A549 (cell line): ENCODE measurements at regions of chr11 and their contacts with region 1.

Region 1: DNA sequence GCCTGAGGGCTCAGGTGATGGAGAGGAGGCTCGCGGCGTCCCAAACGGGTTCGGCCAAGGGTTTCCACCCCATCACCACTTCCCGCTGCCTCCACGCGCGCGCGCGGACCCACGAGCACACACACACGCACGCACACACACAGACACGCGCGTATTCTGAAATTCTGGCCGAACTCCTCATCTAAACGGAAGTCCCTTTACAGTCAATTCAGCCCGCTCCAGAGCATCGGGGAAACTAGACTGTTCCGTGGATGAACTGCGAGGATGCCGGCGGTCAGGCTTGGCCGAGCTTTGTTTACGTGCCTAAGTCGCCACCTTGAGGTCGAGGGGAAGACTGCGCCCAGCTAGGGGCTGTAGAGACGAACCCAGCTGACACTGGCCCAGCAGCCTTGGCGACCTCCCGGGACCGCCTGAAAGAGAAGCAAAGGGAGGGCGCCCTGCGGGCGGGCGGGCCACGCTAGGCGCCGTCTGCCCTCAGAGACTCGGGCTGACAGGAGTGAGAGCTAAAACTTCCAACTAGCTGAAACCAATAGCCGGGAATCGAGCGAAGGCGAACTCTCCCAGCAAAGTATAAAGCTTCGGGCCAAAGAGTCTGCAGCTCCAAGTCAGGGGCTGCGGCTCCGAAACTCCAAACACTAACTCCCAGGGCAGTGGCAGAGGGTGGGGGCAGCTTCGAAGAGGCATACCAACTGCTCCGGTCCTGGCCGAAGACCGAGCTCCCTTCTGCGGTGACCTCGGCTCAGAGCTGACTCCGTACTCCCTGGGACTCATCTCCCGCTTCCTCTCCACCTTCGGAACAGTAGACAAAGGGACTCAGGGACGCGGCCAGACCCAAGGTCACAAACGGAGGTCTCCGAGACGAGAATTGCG is 124.7 kb upstream of the C11orf58 start:
- DNase-seq: peak; percentile 79 to 83
- ATAC-seq: peak; percentile 95 to 99
- H3K4me3 ChIP-seq: peak overlapping the region; percentile 49
- H3K27ac ChIP-seq: peak overlapping the region in 1 of 2 experiments; percentile 40; a peak in 1 of 6 replicates
- H3K4me1 ChIP-seq: peaks cover 10% of the 10 kb centered on the region; the same call in 2 of the 3 replicates
- CTCF ChIP-seq: peak; percentile 81
- EP300 ChIP-seq: no peak
- POLR2A ChIP-seq: no peak
- RAD21 ChIP-seq: peak; percentile 91 to 93

Region 2: DNA sequence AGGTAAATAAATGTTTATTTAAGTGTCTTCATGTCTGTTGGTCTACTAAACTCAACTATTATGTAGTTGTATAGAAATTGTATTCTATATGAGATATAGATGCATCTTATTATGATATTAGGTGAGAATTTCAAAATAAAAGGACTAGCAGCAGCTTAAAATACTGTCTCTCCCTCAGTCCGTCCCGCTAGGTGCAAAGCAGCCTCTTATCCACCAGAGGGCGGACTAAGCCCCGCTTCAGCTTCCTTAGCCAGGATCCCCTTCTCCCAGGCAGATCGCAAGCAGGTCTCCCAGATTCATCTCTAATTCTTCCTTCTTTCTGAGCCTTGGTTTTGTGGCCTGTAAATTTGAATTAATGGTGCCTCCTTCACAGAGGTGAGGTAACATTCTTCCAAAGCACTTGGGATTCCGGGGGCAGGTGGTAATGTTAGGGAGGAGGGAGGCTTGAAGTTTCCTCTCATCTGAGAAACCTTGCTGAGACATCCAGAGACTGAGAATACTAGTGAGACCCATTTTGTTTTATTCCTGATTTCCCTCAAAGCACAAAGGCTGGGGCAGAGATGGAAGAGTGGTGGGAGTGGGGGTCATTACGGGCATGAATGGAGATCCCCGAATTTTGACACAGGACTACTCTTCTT is 1512.6 kb before region 1 on chr11:
- CTCF ChIA-PET with region 1: interaction called, 13 read pairs
- POLR2A ChIA-PET with region 1: no interaction called
- DNase-seq: peak; percentile 57 to 65
- ATAC-seq: peak; percentile 93 to 98
- H3K4me3 ChIP-seq: no peak overlapping the region
- H3K27ac ChIP-seq: no peak overlapping the region
- H3K4me1 ChIP-seq: no peaks in the 10 kb centered on the region
- CTCF ChIP-seq: peak; percentile 88
- EP300 ChIP-seq: no peak
- POLR2A ChIP-seq: no peak
- RAD21 ChIP-seq: peak; percentile 80 to 81

Region 3: DNA sequence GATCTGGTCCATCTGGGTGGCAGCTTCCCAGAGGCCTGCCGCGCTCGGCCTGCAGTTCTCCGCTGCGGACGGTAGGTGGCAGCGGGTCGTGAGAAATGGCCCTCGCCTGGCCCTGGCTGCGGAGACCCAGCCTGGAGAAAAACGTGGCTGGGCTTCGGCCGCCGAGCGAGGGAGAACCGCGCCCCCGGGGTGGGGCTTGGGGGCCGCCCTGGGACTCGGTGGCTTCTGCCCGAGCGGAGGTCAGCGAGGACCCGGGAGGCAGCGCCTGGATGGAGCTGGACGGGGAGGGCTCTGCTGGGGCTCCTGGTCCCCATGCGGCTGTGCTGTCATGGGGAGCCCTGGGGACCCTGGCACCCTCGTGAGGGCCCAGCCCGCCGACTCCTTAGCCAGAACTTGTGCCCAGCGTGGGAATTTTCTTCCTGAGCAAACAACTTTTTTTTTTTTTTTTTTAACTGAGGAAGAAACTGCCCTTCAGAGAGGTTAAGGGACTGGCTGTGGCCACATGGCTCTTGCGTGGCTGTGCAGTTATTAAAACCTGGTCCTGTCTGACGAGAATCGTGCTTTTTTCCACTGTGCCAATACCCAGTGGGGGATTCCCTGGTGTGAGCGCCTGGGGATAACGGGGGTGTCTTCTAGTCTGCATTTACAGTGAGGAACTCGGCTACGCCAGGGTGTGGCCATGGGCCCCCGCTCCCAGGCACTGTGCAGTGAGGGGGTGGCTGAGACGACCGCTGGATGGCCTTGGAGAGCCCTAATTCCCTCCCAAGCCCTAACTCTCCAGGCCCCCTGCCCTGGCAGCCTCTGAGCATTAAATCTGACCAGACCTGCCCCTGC is 963.4 kb before region 1 on chr11:
- CTCF ChIA-PET with region 1: interaction called, 21 read pairs
- POLR2A ChIA-PET with region 1: interaction called, 3 read pairs
- DNase-seq: peak; percentile 79 to 90
- ATAC-seq: peak; percentile 97 to 98
- H3K4me3 ChIP-seq: peak overlapping the region; percentile 43
- H3K27ac ChIP-seq: peak overlapping the region; percentile 84
- H3K4me1 ChIP-seq: peaks cover 6% of the 10 kb centered on the region
- CTCF ChIP-seq: peak; percentile 82
- EP300 ChIP-seq: no peak
- POLR2A ChIP-seq: peak; percentile 59
- RAD21 ChIP-seq: peak; percentile 83 to 95

Region 4: GRCh38 chr11:15770798-15771414 is 842.8 kb before region 1 on chr11:
- CTCF ChIA-PET with region 1: interaction called, 20 read pairs
- POLR2A ChIA-PET with region 1: no interaction called
- DNase-seq: peak; percentile 29 to 36
- ATAC-seq: peak; percentile 59 to 83; a peak in 4 of 6 replicates
- H3K4me3 ChIP-seq: no peak overlapping the region
- H3K27ac ChIP-seq: no peak overlapping the region
- H3K4me1 ChIP-seq: no peaks in the 10 kb centered on the region
- CTCF ChIP-seq: peak; percentile 33; the same call in 2 of the 3 replicates
- EP300 ChIP-seq: no peak
- POLR2A ChIP-seq: no peak
- RAD21 ChIP-seq: peak; percentile 38 to 41

Region 5: GRCh38 chr11:15819679-15820286 is 794.0 kb before region 1 on chr11:
- CTCF ChIA-PET with region 1: interaction called, 29 read pairs
- POLR2A ChIA-PET with region 1: no interaction called
- DNase-seq: peak; percentile 41 to 60
- ATAC-seq: peak; percentile 89 to 97
- H3K4me3 ChIP-seq: no peak overlapping the region
- H3K27ac ChIP-seq: no peak overlapping the region
- H3K4me1 ChIP-seq: no peaks in the 10 kb centered on the region
- CTCF ChIP-seq: peak; percentile 69
- EP300 ChIP-seq: no peak
- POLR2A ChIP-seq: no peak
- RAD21 ChIP-seq: peak; percentile 69 to 71

Region 6: GRCh38 chr11:15826826-15827225 is 786.9 kb before region 1 on chr11:
- CTCF ChIA-PET with region 1: interaction called, 12 read pairs
- POLR2A ChIA-PET with region 1: no interaction called
- DNase-seq: peak; percentile 20 to 25
- ATAC-seq: peak; percentile 70 to 89; a peak in 5 of 6 replicates
- H3K4me3 ChIP-seq: no peak overlapping the region
- H3K27ac ChIP-seq: no peak overlapping the region
- H3K4me1 ChIP-seq: no peaks in the 10 kb centered on the region
- CTCF ChIP-seq: peak; percentile 39
- EP300 ChIP-seq: no peak
- POLR2A ChIP-seq: no peak
- RAD21 ChIP-seq: peak; percentile 65 to 67

Region 7: GRCh38 chr11:15852179-15852578 is 761.6 kb before region 1 on chr11:
- CTCF ChIA-PET with region 1: interaction called, 11 read pairs
- POLR2A ChIA-PET with region 1: no interaction called
- DNase-seq: peak in 1 of 2 experiments; percentile 27
- ATAC-seq: 0 out of 6 replicates have a peak, but pooled peaks of 1 of the 2 experiments have one; percentile 39
- H3K4me3 ChIP-seq: no peak overlapping the region
- H3K27ac ChIP-seq: no peak overlapping the region
- H3K4me1 ChIP-seq: no peaks in the 10 kb centered on the region
- CTCF ChIP-seq: peak; percentile 43
- EP300 ChIP-seq: no peak
- POLR2A ChIP-seq: no peak
- RAD21 ChIP-seq: peak; percentile 50 to 64; a peak in 4 of 5 replicates

Region 8: GRCh38 chr11:16528639-16529038 is 85.1 kb before region 1 on chr11:
- CTCF ChIA-PET with region 1: no interaction called
- POLR2A ChIA-PET with region 1: no interaction called
- DNase-seq: no peak
- ATAC-seq: no peak
- H3K4me3 ChIP-seq: no peak overlapping the region
- H3K27ac ChIP-seq: no peak overlapping the region
- H3K4me1 ChIP-seq: no peaks in the 10 kb centered on the region
- CTCF ChIP-seq: no peak
- EP300 ChIP-seq: no peak
- POLR2A ChIP-seq: no peak
- RAD21 ChIP-seq: no peak